WTC11 (cell line): ENCODE measurements at regions of chr1 and their contacts with region 1.

Region 1: DNA sequence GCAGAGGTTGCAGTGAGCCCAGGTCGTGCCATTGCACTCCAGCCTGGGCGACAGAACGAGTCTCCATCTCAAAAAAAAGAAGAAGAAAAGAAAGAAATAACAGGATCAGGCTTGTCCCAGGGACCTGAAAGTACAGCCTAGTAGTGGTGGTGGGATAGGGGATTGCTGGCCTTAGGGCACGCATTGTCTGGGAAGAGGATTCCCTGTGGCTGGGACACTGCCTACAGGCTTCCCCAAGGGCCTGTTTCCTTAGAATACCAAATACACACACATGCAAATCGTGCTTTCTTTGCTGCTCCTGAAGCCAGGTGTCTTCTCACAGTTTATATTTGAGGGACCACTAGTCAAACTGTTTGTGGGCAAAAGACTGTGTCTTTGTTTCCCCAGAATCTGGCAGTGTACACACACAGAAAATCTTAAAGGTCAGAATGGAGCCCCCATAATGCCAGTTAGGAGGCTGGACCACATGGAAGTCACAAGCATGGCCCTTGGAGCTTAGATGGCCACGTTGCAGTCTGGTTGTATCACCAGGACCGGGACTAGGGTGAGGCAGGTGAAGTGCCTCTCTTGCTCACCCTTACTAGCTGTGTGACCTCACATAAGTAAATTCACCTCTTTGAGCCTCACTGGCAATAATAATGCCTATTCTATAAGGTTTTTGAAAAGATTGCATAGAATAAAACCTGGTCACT is 12.7 kb upstream of the ASAP3 start:
- DNase-seq: no peak
- ATAC-seq: peak; percentile 51
- H3K4me3 Mint-ChIP-seq: no peak overlapping the region
- H3K27ac Mint-ChIP-seq: no peak overlapping the region
- H3K4me1 Mint-ChIP-seq: peaks cover 12% of the 10 kb centered on the region
- H3K27me3 Mint-ChIP-seq: peaks cover 4% of the 10 kb centered on the region
- CTCF ChIP-seq: no peak

Region 2: GRCh38 chr1:23273450-23274133 is 223.0 kb before region 1 on chr1:
- CTCF ChIA-PET with region 1: no interaction called
- POLR2A ChIA-PET with region 1: no interaction called
- DNase-seq: no peak
- ATAC-seq: no peak
- H3K4me3 Mint-ChIP-seq: no peak overlapping the region
- H3K27ac Mint-ChIP-seq: no peak overlapping the region
- H3K4me1 Mint-ChIP-seq: peaks cover 4% of the 10 kb centered on the region
- H3K27me3 Mint-ChIP-seq: no peaks in the 10 kb centered on the region
- CTCF ChIP-seq: no peak

Region 3: GRCh38 chr1:23403735-23404486 is 92.7 kb before region 1 on chr1:
- CTCF ChIA-PET with region 1: interaction called, 15 read pairs
- POLR2A ChIA-PET with region 1: no interaction called
- DNase-seq: peak; percentile 95
- ATAC-seq: peak; percentile 95
- H3K4me3 Mint-ChIP-seq: peak overlapping the region; percentile 45
- H3K27ac Mint-ChIP-seq: no peak overlapping the region
- H3K4me1 Mint-ChIP-seq: peaks cover 9% of the 10 kb centered on the region; the same call in 1 of the 2 replicates
- H3K27me3 Mint-ChIP-seq: no peaks in the 10 kb centered on the region
- CTCF ChIP-seq: peak; percentile 92

Region 4: DNA sequence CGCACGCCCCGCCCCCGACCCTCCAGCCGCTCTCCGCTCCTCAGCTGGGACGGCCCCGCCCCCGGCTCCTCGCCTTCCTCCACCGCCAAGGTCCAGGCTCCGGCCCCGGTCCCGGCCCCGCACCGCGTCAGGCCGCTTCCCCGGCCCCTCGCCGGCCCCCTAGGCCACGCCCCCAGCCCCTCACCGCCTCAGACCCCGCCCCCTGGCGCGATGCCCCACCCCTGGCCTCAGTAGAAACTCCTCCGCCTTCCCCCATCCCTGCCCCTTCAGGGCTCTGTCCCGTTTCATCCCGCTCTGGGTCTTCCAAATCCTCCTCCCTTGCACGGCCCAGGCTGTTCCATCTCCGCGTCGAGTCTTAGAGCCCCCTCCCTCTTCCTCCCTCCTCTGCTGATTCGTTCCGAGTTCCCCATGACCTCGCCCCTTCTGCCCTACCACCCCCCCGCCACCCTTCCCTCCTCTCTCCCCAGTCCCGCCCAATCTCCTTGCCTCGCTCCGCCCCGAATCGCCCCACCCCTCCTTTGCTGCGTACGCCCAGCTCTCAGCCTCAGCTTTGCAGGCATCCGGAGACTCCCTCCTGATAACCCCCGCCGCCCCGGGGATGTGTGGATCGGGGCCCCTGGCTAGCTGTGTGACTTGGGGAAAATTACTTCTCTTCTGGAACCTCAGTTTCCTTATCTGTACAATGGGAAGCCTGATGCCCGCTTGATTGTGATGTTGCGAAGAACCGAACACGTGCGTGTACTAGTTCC is 12.2 kb before region 1 on chr1:
- CTCF ChIA-PET with region 1: interaction called, 146 read pairs
- POLR2A ChIA-PET with region 1: interaction called, 13 read pairs
- DNase-seq: peak; percentile 97
- ATAC-seq: peak; percentile 87
- H3K4me3 Mint-ChIP-seq: peak overlapping the region; percentile 82
- H3K27ac Mint-ChIP-seq: peak overlapping the region; percentile 96
- H3K4me1 Mint-ChIP-seq: peaks cover 44% of the 10 kb centered on the region
- H3K27me3 Mint-ChIP-seq: peaks cover 13% of the 10 kb centered on the region
- CTCF ChIP-seq: no peak

Region 5: DNA sequence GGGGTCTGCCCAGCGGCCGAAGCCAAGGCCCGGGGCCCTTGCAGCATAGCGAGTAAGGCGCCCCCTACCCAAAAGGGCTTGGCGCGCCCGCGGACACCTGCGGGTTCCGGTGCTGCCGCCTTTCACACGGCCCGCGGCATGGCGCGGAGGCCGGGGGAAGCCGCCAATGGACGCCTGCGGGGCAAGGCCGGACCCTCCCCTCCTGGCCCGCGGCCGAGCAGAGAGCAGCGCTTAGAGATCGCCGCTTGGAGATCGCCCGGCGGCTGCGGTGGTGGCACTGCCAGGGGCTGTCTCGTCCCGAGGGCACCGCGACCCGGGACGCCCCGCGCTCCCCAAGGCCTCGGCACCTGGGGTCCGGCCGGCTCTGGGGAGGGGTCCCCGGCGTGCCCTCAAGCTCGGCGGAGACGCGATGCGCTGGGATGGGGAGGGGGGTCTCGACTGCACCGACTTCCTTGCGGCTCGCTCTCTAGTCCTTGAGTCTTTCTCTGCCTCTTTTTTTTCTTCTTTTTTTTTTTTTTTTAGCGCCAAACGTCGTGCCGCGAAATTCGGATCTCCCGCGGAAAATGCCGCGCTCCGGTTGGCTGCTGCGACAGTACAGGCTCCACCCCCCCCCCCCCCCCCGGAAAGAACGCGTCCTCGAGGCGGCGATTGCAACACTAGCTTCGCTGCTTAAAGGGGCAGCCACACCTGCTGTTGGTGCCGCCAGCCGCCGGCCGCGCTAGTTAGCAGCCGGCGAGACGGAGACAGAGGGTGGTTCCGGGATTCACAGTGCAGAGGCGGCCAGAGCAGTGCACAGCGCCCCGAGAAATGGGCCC is 34.3 kb after region 1 on chr1 and contains the start of gene E2F2:
- CTCF ChIA-PET with region 1: interaction called, 101 read pairs
- POLR2A ChIA-PET with region 1: interaction called, 4 read pairs
- DNase-seq: peak; percentile 78
- ATAC-seq: peak; percentile 81
- H3K4me3 Mint-ChIP-seq: peak within 1 kb of the TSS; percentile 80
- H3K27ac Mint-ChIP-seq: no peak within 1 kb of the TSS
- H3K4me1 Mint-ChIP-seq: peaks cover 23% of the 10 kb centered on the region
- H3K27me3 Mint-ChIP-seq: peaks cover 52% of the 10 kb centered on the region
- CTCF ChIP-seq: no peak
- total RNA-seq, gene E2F2: 4.9 to 5.6 TPM (median 5.4 TPM) in 3 replicates

Region 6: GRCh38 chr1:23627069-23627735 is 130.6 kb after region 1 on chr1:
- CTCF ChIA-PET with region 1: no interaction called
- POLR2A ChIA-PET with region 1: no interaction called
- DNase-seq: no peak
- ATAC-seq: peak; percentile 39; the same call in 1 of the 2 replicates
- H3K4me3 Mint-ChIP-seq: no peak overlapping the region
- H3K27ac Mint-ChIP-seq: no peak overlapping the region
- H3K4me1 Mint-ChIP-seq: peaks cover 27% of the 10 kb centered on the region
- H3K27me3 Mint-ChIP-seq: peaks cover 4% of the 10 kb centered on the region
- CTCF ChIP-seq: no peak

Region 7: GRCh38 chr1:23657659-23658275 is 161.1 kb after region 1 on chr1:
- CTCF ChIA-PET with region 1: interaction called, 38 read pairs
- POLR2A ChIA-PET with region 1: no interaction called
- DNase-seq: peak; percentile 89
- ATAC-seq: peak; percentile 97
- H3K4me3 Mint-ChIP-seq: no peak overlapping the region
- H3K27ac Mint-ChIP-seq: no peak overlapping the region
- H3K4me1 Mint-ChIP-seq: peaks cover 3% of the 10 kb centered on the region
- H3K27me3 Mint-ChIP-seq: no peaks in the 10 kb centered on the region
- CTCF ChIP-seq: peak; percentile 95

Region 8: GRCh38 chr1:23691499-23692307 is 195.1 kb after region 1 on chr1 and contains the start of gene RPL11:
- CTCF ChIA-PET with region 1: interaction called, 12 read pairs
- POLR2A ChIA-PET with region 1: no interaction called
- DNase-seq: peak; percentile 89
- ATAC-seq: peak; percentile 98
- H3K4me3 Mint-ChIP-seq: peak within 1 kb of the TSS; percentile 98
- H3K27ac Mint-ChIP-seq: peak within 1 kb of the TSS; percentile 93
- H3K4me1 Mint-ChIP-seq: peaks cover 44% of the 10 kb centered on the region
- H3K27me3 Mint-ChIP-seq: no peaks in the 10 kb centered on the region; the same call in 1 of the 2 replicates
- CTCF ChIP-seq: no peak
- total RNA-seq, gene RPL11: 1,406 to 1,500 TPM (median 1,442 TPM) in 3 replicates